Activated naive CD4-positive, alpha-beta T cell treated with anti-CD3 and anti-CD28 coated beads for 36 hours (primary cell): ENCODE measurements at regions of chr6 and their contacts with region 1.

Region 1: GRCh38 chr6:105909106-105909505 is 177.0 kb upstream of the PRDM1 start:
- DNase-seq: no peak
- H3K4me3 Mint-ChIP-seq: no peak overlapping the region
- H3K27ac Mint-ChIP-seq: no peak overlapping the region
- H3K4me1 Mint-ChIP-seq: no peaks in the 10 kb centered on the region
- H3K27me3 Mint-ChIP-seq: peaks cover 2% of the 10 kb centered on the region

Region 2: DNA sequence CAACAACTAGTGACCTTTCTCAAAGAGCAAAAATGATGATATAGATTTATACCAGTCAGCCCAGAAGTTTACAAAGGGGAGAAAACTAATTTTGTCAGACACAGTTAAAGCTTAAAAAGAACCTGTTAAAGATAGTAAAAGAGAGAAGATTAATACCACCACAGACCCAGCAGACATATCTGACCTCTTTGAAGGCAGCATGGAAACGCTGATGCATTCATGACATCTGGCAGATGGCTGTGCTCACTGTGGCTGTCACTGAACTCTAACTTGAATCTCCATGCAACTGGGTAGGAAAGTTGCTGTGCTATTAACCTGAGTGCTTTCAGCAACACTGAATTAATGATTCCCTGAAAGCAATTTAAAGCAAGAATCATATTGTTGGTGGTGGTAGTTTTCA is 17.2 kb after region 1 on chr6:
- CTCF ChIA-PET with region 1: no interaction called
- intact Hi-C with region 1: loop called (anchors 1 kb)
- DNase-seq: peak; percentile 7
- H3K4me3 Mint-ChIP-seq: no peak overlapping the region
- H3K27ac Mint-ChIP-seq: no peak overlapping the region
- H3K4me1 Mint-ChIP-seq: no peaks in the 10 kb centered on the region
- H3K27me3 Mint-ChIP-seq: no peaks in the 10 kb centered on the region